Naive thymus-derived CD4-positive, alpha-beta T cell (primary cell): ENCODE measurements at regions of chr12 and their contacts with region 1.

Region 1: DNA sequence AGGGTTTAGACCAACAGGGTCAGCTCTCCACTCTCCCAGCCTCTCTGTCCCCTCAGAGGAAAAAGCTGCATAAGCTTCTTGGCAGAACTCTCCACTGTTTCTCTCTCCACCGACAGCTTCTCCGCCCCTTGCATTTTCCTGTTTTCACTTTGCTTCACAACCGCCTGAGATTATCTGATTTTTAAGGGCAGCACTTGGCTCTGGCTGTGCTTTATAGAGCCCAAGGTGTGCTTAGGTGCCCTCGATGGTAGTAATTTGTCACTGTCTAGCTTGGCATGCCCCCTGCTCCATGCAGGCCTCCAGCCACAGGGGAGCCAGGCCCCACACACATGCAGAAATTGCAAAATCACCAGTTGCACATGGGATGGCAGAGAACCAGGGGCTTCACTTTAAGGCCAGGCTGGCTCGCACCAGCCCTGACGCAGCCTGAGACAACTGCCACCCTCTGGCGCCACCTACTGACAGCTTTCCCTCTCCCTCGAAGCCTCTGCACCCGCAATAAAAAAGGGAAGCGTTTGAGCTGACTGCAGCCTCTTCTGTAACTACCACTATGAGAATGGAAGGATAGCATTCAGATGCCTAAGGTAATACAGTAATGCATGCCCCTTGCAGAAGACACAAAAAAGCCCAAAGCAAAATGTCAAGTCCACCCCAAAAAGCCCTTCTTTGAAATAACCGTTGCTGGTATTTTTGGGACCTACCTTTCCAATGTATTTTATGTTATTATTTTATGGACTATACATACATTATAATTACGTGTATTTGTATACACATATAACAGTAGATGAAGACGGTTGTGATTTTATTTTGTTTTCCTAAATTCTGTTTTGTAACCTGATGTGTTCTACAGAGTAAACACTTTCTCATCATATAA is 32.0 kb upstream of the RIMBP2 start:
- DNase-seq: peak; percentile 18 to 70 (median 59)
- ATAC-seq: peak; percentile 88
- H3K4me3 ChIP-seq: no peak overlapping the region
- H3K4me3 Mint-ChIP-seq: peak overlapping the region in 6 of 10 donors; percentile 9 to 75 (median 48)
- H3K27ac ChIP-seq: no peak overlapping the region
- H3K27ac Mint-ChIP-seq: peak overlapping the region in 2 of 9 donors; percentile 11 to 74
- H3K4me1 ChIP-seq: peaks cover 0 to 4% of the 10 kb centered on the region in 2 donors
- H3K4me1 Mint-ChIP-seq: peaks cover 4 to 13% (median 8%) of the 10 kb centered on the region in 7 donors
- H3K27me3 ChIP-seq: no peaks in the 10 kb centered on the region
- H3K27me3 Mint-ChIP-seq: peaks cover 0 to 24% (median 5%) of the 10 kb centered on the region in 5 donors

Region 2: DNA sequence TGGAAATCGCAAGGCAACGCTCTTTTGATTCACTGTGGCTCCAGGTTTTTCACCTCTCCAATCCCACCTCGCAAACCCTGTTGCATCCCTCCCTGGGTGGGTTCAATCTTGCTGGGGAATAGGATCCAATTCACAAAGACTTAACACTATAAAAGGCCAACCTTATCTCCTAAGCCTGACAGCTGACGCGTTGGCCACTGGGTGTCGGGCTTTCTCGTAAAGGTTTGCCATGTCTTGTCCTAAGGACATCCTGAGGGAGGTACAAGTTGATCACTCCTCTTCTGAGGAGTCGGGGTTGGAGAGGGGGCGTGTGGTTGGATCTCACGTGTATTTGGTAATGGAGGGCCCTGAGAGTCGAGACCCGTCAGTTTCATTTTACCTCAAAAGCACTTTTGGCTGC is 698.4 kb before region 1 on chr12:
- CTCF ChIA-PET with region 1: no interaction called
- POLR2A ChIA-PET with region 1: no interaction called
- intact Hi-C with region 1: loop called in 1 of 2 experiments (anchors 2 kb)
- DNase-seq: no peak
- ATAC-seq: no peak
- H3K4me3 ChIP-seq: no peak overlapping the region
- H3K4me3 Mint-ChIP-seq: no peak overlapping the region
- H3K27ac ChIP-seq: no peak overlapping the region
- H3K27ac Mint-ChIP-seq: no peak overlapping the region
- H3K4me1 ChIP-seq: peaks cover 0 to 4% of the 10 kb centered on the region in 2 donors
- H3K4me1 Mint-ChIP-seq: peaks cover 0 to 5% (median 3%) of the 10 kb centered on the region in 7 donors
- H3K27me3 ChIP-seq: peaks cover 0 to 4% of the 10 kb centered on the region in 2 donors
- H3K27me3 Mint-ChIP-seq: peaks cover 21 to 47% (median 35%) of the 10 kb centered on the region in 5 donors

Region 3: DNA sequence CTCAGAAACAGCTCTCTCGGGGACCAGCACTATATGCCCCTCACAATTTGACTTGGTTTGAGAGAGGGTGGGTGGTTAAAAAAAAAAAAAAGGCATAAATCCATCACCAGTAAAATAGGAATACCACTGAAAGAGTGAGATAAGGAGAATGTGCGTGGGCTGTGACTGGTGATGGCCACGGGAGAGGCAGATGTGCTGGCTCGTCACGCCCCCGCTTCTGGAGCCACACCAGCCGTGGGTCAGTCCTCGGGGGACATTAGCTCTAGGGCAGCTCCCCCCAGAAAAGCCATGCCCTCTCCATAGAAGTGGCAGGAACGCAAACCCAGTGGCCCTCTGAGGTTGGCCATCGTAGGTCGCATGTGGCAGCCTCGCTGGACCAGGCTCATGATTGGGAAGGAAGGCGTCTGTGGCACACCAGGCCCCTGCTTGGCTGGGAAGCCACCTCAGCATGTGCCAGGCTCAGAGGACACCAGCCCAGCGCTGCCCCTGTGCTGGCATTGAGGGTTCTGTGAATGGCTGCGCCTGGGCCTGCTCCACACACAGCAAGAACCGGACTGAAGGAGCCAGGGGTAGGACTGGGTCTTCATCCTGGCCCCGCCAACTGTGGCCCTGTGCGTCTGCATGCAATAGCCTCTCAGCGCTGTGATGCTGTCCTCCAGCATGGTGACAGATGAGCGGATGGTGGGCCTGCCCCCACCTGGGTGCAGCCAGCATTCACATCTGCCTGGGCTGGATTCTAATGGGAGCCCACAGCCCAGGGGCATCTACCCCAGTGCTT is 299.9 kb before region 1 on chr12:
- CTCF ChIA-PET with region 1: no interaction called
- POLR2A ChIA-PET with region 1: no interaction called
- intact Hi-C with region 1: loop called in 1 of 2 experiments (anchors 5 kb)
- DNase-seq: no peak
- ATAC-seq: no peak
- H3K4me3 ChIP-seq: no peak overlapping the region
- H3K4me3 Mint-ChIP-seq: no peak overlapping the region
- H3K27ac ChIP-seq: no peak overlapping the region
- H3K27ac Mint-ChIP-seq: no peak overlapping the region
- H3K4me1 ChIP-seq: no peaks in the 10 kb centered on the region
- H3K4me1 Mint-ChIP-seq: no peaks in the 10 kb centered on the region
- H3K27me3 ChIP-seq: no peaks in the 10 kb centered on the region
- H3K27me3 Mint-ChIP-seq: no peaks in the 10 kb centered on the region

Region 4: DNA sequence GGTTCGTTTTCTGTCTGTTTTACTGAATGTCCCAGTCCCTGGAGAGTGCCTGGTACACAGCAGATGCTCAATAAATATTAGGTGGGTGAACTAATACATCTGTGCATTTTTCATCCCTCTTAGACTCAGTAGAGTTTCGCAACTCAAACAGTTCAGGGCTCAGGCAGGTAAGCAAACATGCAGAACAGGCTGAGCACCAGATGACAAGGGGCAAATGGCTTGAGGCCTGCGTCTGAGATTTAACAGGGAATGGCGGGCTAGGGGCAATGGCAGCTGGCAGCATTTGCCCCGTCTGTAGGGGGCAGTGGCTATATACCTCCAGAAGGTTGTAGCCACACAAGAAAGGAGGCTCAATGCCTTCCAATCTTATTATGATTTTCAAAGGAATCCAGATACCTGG is 115.2 kb after region 1 on chr12:
- CTCF ChIA-PET with region 1: no interaction called
- POLR2A ChIA-PET with region 1: no interaction called
- intact Hi-C with region 1: no loop called
- DNase-seq: no peak
- ATAC-seq: no peak
- H3K4me3 ChIP-seq: no peak overlapping the region
- H3K4me3 Mint-ChIP-seq: no peak overlapping the region
- H3K27ac ChIP-seq: no peak overlapping the region
- H3K27ac Mint-ChIP-seq: peak overlapping the region in 2 of 9 donors; percentile 63
- H3K4me1 ChIP-seq: peaks cover 7 to 13% of the 10 kb centered on the region in 2 donors
- H3K4me1 Mint-ChIP-seq: peaks cover 6 to 23% (median 15%) of the 10 kb centered on the region in 7 donors
- H3K27me3 ChIP-seq: no peaks in the 10 kb centered on the region
- H3K27me3 Mint-ChIP-seq: no peaks in the 10 kb centered on the region